GM13976 (cell line): ENCODE measurements at regions of chr16 and their contacts with region 1.

Region 1: DNA sequence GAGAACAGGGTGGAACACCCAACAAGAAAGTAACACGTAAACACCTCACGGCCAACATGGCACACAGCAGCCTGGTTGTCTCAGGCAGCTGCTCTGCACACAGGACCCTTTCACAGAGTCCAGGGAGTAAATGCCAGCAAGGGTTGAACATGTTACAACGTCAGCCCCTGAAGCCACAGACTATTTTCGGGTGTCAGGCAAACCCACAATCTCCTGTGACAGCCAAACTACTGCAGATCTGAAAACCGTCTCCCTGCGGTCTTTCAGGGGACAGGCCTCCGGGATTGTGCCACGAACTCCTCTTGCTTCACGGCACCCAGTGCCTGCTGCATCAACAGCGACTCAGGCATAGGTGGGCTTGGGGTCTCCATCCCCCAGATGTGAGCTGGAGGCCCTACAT is 127.7 kb downstream of the XYLT1 start:
- DNase-seq: peak; percentile 62
- CTCF ChIP-seq: no peak

Region 2: GRCh38 chr16:17283016-17283415 is 60.0 kb before region 1 on chr16:
- in situ Hi-C with region 1: loop called (anchors 10 kb)
- DNase-seq: no peak
- CTCF ChIP-seq: no peak

Region 3: GRCh38 chr16:17511340-17511739 is 168.3 kb after region 1 on chr16:
- in situ Hi-C with region 1: no loop called
- DNase-seq: no peak
- CTCF ChIP-seq: no peak